Prostate gland (tissue), 2 donors: ENCODE measurements at regions of chr7 and their contacts with region 1.

Region 1: GRCh38 chr7:3154912-3155494 is 111.3 kb upstream of the CARD11 start:
- DNase-seq: peak; percentile 29
- H3K4me3 ChIP-seq: no peak overlapping the region
- H3K27ac ChIP-seq: no peak overlapping the region
- H3K4me1 ChIP-seq: no peaks in the 10 kb centered on the region
- H3K27me3 ChIP-seq: no peaks in the 10 kb centered on the region
- CTCF ChIP-seq: peak in 3 of 4 experiments; percentile 67 to 78 (median 73)
- POLR2A ChIP-seq: no peak

Region 2: GRCh38 chr7:2863461-2864066 is 291.4 kb before region 1 on chr7:
- intact Hi-C with region 1: loop called (anchors 10 kb)
- DNase-seq: no peak
- H3K4me3 ChIP-seq: no peak overlapping the region
- H3K27ac ChIP-seq: peak overlapping the region; percentile 49 to 65
- H3K4me1 ChIP-seq: no peaks in the 10 kb centered on the region
- H3K27me3 ChIP-seq: no peaks in the 10 kb centered on the region
- CTCF ChIP-seq: no peak
- POLR2A ChIP-seq: no peak

Region 3: DNA sequence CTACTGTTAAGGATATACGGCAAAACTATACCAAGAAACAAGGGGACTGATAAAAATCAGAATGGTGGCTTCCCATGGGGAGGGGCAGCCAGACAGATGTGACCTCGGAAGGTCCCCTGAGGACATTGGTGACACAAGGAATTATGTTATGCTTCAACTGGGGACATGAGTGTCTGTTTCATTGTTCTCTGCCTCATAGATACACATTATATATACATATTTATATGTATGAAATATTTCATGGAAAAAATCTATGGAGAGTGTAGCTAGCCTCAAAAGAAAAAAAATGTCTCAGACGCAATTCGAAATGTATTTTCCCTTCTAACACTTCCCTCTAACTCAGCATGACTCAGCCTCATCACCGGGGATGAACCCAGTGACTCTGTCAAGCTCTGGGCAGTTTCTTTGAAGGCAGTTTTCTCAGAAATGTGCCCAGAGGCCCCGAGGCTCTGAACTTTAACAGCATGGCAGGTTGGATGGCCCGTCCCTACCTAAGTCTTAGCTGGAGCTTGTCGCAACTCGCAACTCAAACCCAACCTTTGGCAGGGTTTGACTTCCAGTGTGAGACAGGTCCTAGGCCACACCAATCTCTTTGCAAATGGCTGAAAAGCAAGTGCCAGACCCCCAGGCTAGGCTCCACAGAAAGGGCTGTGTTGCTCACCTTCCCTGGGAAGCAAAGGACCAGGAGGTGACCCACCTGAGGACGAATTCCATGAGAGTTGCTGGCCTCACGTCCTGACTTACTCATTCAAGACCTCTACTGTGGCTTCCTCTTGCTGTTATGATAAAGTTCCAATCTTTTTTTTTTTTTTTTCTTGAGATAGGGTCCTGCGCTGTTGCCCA is 198.3 kb before region 1 on chr7:
- intact Hi-C with region 1: no loop called
- DNase-seq: peak; percentile 24
- H3K4me3 ChIP-seq: no peak overlapping the region
- H3K27ac ChIP-seq: no peak overlapping the region
- H3K4me1 ChIP-seq: no peaks in the 10 kb centered on the region
- H3K27me3 ChIP-seq: no peaks in the 10 kb centered on the region
- CTCF ChIP-seq: no peak
- POLR2A ChIP-seq: no peak